AG04450 (cell line): ENCODE measurements at regions of chr1 and their contacts with region 1.

Region 1: GRCh38 chr1:205227584-205228006 is at the start of gene TMCC2:
- DNase-seq: peak; percentile 66
- H3K4me3 ChIP-seq: peak within 1 kb of the TSS; percentile 75
- H3K27ac ChIP-seq: peak within 1 kb of the TSS; percentile 11
- H3K27me3 ChIP-seq: peaks cover 2% of the 10 kb centered on the region
- CTCF ChIP-seq: 0 out of 2 replicates have a peak, but pooled peaks have one; percentile 9
- polyA plus RNA-seq, gene TMCC2: 2.3 and 3.0 TPM in 2 replicates

Region 2: GRCh38 chr1:205250699-205251098 is 23.1 kb after region 1 on chr1:
- CTCF ChIA-PET with region 1: interaction called, 107 read pairs
- POLR2A ChIA-PET with region 1: interaction called, 3 read pairs
- DNase-seq: no peak
- H3K4me3 ChIP-seq: no peak overlapping the region
- H3K27ac ChIP-seq: no peak overlapping the region
- H3K27me3 ChIP-seq: no peaks in the 10 kb centered on the region
- CTCF ChIP-seq: no peak